Posterior vena cava (tissue), 2 donors: ENCODE measurements at regions of chr9 and their contacts with region 1.

Region 1: GRCh38 chr9:27033823-27034403 is 28.4 kb upstream of the LRRC19 start:
- DNase-seq: no peak

Region 2: GRCh38 chr9:26537211-26537610 is 496.7 kb before region 1 on chr9:
- intact Hi-C with region 1: no loop called
- DNase-seq: no peak

Region 3: DNA sequence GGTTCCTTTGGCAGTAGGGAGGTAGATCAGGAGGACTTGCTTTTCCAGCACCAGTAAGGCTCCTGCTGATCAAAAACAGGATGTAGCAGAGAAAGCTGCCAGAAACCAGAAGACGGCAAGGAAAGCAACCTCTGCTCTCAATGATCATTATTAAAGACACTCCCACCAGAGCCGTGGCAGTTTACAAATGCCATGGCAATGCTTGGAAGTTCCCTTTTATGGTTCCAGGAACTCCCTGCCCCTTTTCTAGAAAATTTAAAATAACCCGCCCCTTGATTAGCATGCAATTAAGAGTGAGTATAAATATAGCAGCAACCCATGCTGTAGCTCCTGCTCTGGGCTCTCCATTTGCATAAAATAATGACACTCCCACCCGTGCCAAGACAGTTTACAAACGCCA is 246.9 kb after region 1 on chr9:
- intact Hi-C with region 1: loop called in 1 of 2 experiments (anchors 10 kb)
- DNase-seq: peak; percentile 41

Region 4: GRCh38 chr9:27954858-27955257 is 920.9 kb after region 1 on chr9:
- intact Hi-C with region 1: no loop called
- DNase-seq: no peak